ENCODE measurements at regions of chr11 and their contacts with region 1.

Region 1: DNA sequence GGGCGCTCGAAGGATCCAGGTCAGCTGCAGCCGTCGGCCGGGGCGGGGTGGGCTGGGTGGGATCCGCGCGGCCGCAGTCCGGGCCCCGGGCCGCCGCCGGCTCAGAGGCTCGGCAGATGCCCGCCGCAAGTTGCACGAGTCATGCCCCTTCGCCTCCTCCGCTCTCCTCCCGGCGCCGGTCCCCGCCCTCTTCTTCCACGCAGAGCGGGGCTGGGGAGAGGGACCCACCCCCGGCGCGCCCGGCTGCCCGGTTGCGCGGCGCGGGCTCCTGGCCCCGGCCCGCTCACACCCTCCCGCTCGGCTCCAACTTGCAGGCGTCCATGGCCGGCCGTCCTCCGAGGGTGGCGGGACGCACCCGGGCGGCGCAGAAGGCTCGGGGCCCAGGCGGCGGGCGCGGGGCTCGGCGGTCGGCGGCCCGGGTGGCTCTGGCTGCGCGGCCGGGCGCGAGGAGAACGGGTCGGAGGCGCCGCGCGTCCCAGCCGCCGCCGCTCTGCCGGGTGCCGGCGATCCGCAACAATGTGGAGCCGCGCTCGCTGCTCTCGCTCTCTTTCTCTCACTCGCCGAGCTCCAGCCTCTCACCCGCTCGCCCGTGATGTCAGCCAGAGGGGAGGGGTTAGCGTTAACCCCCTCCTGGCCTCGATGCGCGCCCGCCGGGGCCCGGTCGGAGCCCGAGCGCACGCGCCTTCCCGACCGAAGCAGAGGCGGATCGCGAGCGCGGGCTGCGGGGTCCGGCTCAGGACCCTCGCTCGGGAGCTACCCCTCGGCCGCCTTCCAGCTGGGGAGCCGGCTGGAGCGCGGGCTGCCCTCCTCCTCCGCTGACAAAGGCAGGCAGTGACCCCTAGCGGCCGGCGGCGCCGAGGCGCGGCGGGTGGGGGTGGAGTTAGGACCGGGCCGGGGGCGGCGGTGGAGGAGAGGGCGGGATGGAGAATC is at the start of gene NECTIN1:
- DNase-seq: no peak
- H3K4me3 ChIP-seq: peak within 1 kb of the TSS; percentile 67
- CTCF ChIP-seq: peak; percentile 95

Region 2: GRCh38 chr11:119121008-119121810 is 607.7 kb before region 1 on chr11 and contains the start of gene HINFP:
- CTCF ChIA-PET with region 1: no interaction called
- POLR2A ChIA-PET with region 1: no interaction called
- DNase-seq: peak; percentile 88
- H3K4me3 ChIP-seq: peak within 1 kb of the TSS; percentile 100
- CTCF ChIP-seq: no peak

Region 3: DNA sequence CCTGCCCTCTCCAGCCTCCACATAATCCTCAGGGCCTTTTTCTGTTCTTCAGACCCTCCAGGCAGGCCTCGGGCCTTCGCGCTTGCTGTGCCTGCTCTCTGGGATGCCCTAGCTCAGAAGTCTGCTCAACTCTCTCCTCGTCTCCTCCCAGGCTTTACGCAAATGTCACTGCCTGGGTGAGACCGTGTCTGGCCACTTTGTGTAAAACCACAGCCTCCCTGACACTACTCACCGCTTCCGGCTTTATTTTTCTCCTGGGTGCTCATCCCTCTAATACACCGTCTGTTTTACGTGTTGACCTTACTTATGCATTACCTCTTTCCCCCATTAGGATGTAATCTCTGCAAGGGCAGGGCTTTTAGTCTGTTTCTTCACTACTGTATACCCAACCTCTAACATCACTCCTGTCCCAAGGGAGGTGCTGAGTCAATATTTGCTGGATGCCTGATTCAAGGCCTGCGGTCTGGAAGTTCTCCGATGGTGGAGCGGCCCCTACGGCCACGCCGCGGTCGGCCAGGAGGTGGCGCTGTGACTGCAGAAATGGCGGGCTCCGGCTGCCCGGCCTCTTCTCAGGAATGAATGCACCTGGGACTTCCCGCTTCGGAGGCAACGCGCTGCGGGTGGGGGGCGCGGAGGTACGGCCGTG is 247.8 kb before region 1 on chr11:
- CTCF ChIA-PET with region 1: interaction called, 15 read pairs
- POLR2A ChIA-PET with region 1: no interaction called
- DNase-seq: peak; percentile 90
- H3K4me3 ChIP-seq: no peak overlapping the region
- CTCF ChIP-seq: peak; percentile 95

Region 4: GRCh38 chr11:119673759-119674336 is 55.1 kb before region 1 on chr11:
- CTCF ChIA-PET with region 1: interaction called, 38 read pairs
- POLR2A ChIA-PET with region 1: no interaction called
- DNase-seq: no peak
- H3K4me3 ChIP-seq: no peak overlapping the region
- CTCF ChIP-seq: no peak

Region 5: GRCh38 chr11:119709638-119710346 is 19.1 kb before region 1 on chr11:
- CTCF ChIA-PET with region 1: interaction called, 19 read pairs
- POLR2A ChIA-PET with region 1: interaction called, 3 read pairs
- DNase-seq: no peak
- H3K4me3 ChIP-seq: peak overlapping the region; percentile 25
- CTCF ChIP-seq: no peak

Region 6: GRCh38 chr11:119747868-119748660 is 19.1 kb after region 1 on chr11:
- CTCF ChIA-PET with region 1: interaction called, 24 read pairs
- POLR2A ChIA-PET with region 1: no interaction called
- DNase-seq: no peak
- H3K4me3 ChIP-seq: no peak overlapping the region
- CTCF ChIP-seq: no peak

Region 7: DNA sequence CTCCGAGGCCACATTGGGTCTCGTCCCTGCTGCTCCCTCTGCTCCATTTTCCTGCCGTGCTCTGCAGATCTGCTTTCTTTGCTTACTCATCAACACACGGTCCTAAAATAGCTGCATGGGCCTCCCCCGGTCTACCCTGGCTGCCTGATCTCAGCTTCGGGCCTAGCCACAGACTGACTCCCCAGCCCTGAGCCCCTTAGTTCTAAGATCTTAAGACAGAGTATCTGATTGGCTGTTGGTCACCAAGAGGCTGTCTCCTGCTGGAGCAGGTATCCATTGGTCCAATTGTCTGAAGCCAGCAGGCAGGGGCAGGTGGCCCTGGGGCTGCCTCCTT is 53.8 kb after region 1 on chr11:
- CTCF ChIA-PET with region 1: interaction called, 13 read pairs
- POLR2A ChIA-PET with region 1: no interaction called
- DNase-seq: peak; percentile 23
- H3K4me3 ChIP-seq: no peak overlapping the region
- CTCF ChIP-seq: no peak

Region 8: GRCh38 chr11:119843877-119844276 is 115.0 kb after region 1 on chr11:
- CTCF ChIA-PET with region 1: no interaction called
- POLR2A ChIA-PET with region 1: no interaction called
- DNase-seq: no peak
- H3K4me3 ChIP-seq: no peak overlapping the region
- CTCF ChIP-seq: no peak

Region 9: GRCh38 chr11:120108154-120108865 is 379.4 kb after region 1 on chr11:
- CTCF ChIA-PET with region 1: interaction called, 17 read pairs
- POLR2A ChIA-PET with region 1: interaction called, 5 read pairs
- DNase-seq: no peak
- H3K4me3 ChIP-seq: no peak overlapping the region
- CTCF ChIP-seq: peak; percentile 98